ENCODE measurements at regions of chr3 and their contacts with region 1.

Region 1: GRCh38 chr3:2984005-2984830 is 126.0 kb downstream of the IL5RA start:
- DNase-seq: no peak
- H3K4me3 Mint-ChIP-seq: no peak overlapping the region
- H3K27ac Mint-ChIP-seq: no peak overlapping the region
- H3K4me1 Mint-ChIP-seq: no peaks in the 10 kb centered on the region
- H3K27me3 Mint-ChIP-seq: peaks cover 70% of the 10 kb centered on the region
- CTCF ChIP-seq: no peak

Region 2: GRCh38 chr3:2851835-2852234 is 132.4 kb before region 1 on chr3:
- CTCF ChIA-PET with region 1: no interaction called
- POLR2A ChIA-PET with region 1: no interaction called
- intact Hi-C with region 1: no loop called
- DNase-seq: no peak
- H3K4me3 Mint-ChIP-seq: no peak overlapping the region
- H3K27ac Mint-ChIP-seq: no peak overlapping the region
- H3K4me1 Mint-ChIP-seq: peaks cover 6% of the 10 kb centered on the region
- H3K27me3 Mint-ChIP-seq: peaks cover 53% of the 10 kb centered on the region
- CTCF ChIP-seq: no peak

Region 3: DNA sequence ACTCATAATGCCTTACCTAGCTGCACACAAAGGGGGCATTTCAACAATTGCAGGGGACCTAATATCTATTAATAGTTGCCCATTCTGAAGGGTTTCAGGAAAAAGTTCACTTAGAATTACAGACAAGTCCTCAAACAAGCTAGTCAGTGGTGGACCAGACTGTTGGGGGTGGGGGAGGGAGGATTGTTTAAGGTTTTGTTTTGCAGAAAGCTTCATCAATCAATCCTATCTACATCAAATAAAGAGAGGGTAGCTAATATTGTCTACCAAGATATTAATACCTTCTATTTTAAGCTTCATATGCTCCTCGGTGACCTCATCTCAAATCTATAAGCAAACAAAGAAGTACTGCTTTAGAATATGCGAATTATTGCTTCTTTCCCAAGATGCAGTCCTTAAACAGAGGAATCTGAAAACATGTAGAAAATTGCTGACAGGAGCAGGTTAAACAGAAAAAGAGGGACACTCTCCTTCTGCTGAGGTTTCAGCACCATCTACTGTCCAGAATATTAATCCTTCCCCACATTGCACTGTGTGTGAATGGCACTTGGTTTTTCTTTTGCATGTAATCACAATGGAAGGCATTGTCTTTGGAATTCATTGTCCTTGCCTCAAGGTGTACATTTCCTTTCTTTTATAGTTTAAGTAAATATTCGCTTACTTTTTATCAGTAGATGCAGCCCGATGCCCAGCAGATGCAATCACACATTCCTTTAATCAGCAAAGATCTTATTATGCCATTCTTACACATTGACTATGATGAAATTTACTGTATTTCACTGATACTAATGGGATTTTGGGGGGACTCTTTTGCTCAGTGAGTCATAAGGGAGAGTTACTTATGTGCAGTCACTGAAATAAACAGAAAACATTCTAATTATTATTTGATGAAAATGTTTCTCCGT is 31.2 kb after region 1 on chr3:
- CTCF ChIA-PET with region 1: interaction called, 3 read pairs
- POLR2A ChIA-PET with region 1: no interaction called
- intact Hi-C with region 1: loop called (anchors 5 kb)
- DNase-seq: peak; percentile 53
- H3K4me3 Mint-ChIP-seq: no peak overlapping the region
- H3K27ac Mint-ChIP-seq: no peak overlapping the region
- H3K4me1 Mint-ChIP-seq: no peaks in the 10 kb centered on the region
- H3K27me3 Mint-ChIP-seq: peaks cover 100% of the 10 kb centered on the region
- CTCF ChIP-seq: peak; percentile 50

Region 4: DNA sequence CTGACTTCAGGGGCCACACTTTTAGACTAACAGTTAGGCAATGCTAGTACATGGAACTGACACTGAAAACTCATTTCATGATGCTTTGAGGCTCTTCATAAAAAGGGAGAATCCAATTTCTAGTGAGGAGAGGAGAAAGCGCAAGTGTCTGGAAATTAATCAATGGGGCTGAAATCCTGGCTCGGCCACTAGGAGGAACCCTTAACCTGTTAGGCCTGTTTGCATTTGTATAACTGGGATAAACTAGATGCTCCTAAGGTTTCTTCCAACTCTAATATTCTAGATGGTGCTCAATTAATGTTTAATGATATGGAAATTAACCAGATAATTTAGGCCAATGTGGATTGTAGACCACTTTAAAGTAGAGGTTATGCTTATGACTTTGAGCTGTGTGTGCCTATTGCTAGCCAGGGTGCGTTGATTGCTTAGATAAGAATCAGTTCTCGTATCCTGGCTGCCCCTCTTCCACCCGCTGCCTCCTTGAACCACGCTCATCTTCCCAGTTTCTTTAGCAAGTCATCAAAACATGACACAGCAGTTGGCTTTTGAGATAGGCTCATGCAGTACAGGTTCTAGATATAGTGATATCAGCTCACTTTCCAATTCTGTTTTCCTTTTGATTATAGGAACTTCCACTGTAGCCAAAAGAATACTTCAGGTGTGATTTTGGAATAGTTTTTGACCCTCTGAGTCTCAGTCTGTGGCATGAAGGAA is 212.1 kb after region 1 on chr3:
- CTCF ChIA-PET with region 1: no interaction called
- POLR2A ChIA-PET with region 1: no interaction called
- intact Hi-C with region 1: no loop called
- DNase-seq: peak; percentile 29
- H3K4me3 Mint-ChIP-seq: no peak overlapping the region
- H3K27ac Mint-ChIP-seq: no peak overlapping the region
- H3K4me1 Mint-ChIP-seq: no peaks in the 10 kb centered on the region
- H3K27me3 Mint-ChIP-seq: peaks cover 45% of the 10 kb centered on the region
- CTCF ChIP-seq: peak; percentile 40

Measured in MCF 10A (cell line).